Activated CD4-positive, alpha-beta T cell treated with anti-CD3 and anti-CD28 coated beads, Interleukin-2, amount 10 ng/mL, durations not matched to agents 24 days and 14 days (primary cell): ENCODE measurements at regions of chr2 and their contacts with region 1.

Region 1: GRCh38 chr2:222690564-222691200 is 19.2 kb downstream of the MOGAT1 start:
- DNase-seq: peak; percentile 92
- H3K4me3 Mint-ChIP-seq: no peak overlapping the region
- H3K27ac Mint-ChIP-seq: no peak overlapping the region
- H3K4me1 Mint-ChIP-seq: peaks cover 12% of the 10 kb centered on the region
- H3K27me3 Mint-ChIP-seq: peaks cover 17% of the 10 kb centered on the region

Region 2: GRCh38 chr2:222572751-222573174 is 117.9 kb before region 1 on chr2:
- intact Hi-C with region 1: no loop called
- DNase-seq: no peak
- H3K4me3 Mint-ChIP-seq: no peak overlapping the region
- H3K27ac Mint-ChIP-seq: peak overlapping the region; percentile 9
- H3K4me1 Mint-ChIP-seq: peaks cover 15% of the 10 kb centered on the region
- H3K27me3 Mint-ChIP-seq: no peaks in the 10 kb centered on the region

Region 3: GRCh38 chr2:222627764-222628163 is 62.9 kb before region 1 on chr2:
- intact Hi-C with region 1: no loop called
- DNase-seq: no peak
- H3K4me3 Mint-ChIP-seq: no peak overlapping the region
- H3K27ac Mint-ChIP-seq: no peak overlapping the region
- H3K4me1 Mint-ChIP-seq: peaks cover 3% of the 10 kb centered on the region
- H3K27me3 Mint-ChIP-seq: no peaks in the 10 kb centered on the region

Region 4: DNA sequence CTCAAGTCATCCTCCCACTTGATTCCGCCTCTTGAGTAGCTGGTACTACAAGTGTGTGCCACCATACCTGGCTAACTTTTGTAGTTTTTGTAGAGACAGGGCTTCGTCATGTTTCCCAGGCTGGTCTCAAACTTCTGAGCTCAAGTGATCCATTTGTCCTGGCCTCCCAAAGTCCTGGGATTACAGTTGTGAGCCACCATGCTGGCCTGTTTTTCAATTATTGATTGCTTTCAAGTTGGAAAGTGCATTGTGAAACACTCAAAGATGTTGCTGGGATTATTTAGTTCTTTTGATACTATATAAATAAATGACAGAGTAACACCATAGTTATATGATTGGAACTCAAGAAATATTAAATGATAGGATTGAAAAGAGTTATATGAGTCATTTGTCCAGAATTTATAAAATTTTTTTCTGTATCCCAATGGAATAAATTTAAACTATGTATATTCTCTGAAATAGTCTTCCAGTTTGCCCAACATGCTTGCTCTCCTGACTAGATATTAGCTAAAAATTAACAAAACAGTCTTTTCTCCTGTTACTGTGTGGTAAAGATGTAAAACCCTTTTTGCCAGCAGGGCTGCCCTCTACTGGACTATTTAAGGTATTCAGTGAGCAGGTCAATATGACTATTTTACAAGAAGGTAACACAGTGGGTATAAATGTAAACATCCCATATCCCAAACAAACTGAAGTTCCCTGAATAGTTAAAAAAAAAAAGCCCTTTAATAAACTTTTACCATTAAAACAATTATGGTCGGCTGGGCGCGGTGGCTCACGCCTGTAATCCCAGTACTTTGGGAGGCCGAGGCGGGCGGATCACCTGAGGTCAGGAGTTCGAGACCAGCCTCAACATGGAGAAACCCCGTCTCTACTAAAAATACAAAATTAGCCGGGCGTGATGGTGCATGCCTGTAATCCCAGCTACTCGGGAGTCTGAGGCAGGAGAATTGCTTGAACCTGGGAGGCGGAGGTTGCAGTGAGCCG is 212.8 kb after region 1 on chr2:
- intact Hi-C with region 1: loop called (anchors 1 kb)
- DNase-seq: peak; percentile 76
- H3K4me3 Mint-ChIP-seq: no peak overlapping the region
- H3K27ac Mint-ChIP-seq: no peak overlapping the region
- H3K4me1 Mint-ChIP-seq: peaks cover 12% of the 10 kb centered on the region
- H3K27me3 Mint-ChIP-seq: no peaks in the 10 kb centered on the region

Region 5: GRCh38 chr2:222939208-222939856 is 248.7 kb after region 1 on chr2:
- intact Hi-C with region 1: loop called (anchors 1 kb)
- DNase-seq: peak; percentile 91
- H3K4me3 Mint-ChIP-seq: no peak overlapping the region
- H3K27ac Mint-ChIP-seq: no peak overlapping the region
- H3K4me1 Mint-ChIP-seq: peaks cover 2% of the 10 kb centered on the region
- H3K27me3 Mint-ChIP-seq: no peaks in the 10 kb centered on the region